ENCODE measurements at regions of chr12 and their contacts with region 1.

Region 1: GRCh38 chr12:30695199-30696103 is at the start of gene IPO8:
- DNase-seq: peak; percentile 92
- H3K4me3 ChIP-seq: peak within 1 kb of the TSS; percentile 80
- H3K27ac ChIP-seq: peak within 1 kb of the TSS; percentile 16
- H3K4me1 ChIP-seq: peaks cover 23% of the 10 kb centered on the region
- CTCF ChIP-seq: peak; percentile 69
- total RNA-seq, gene IPO8: 14.7 and 23.9 TPM in 2 replicates

Region 2: GRCh38 chr12:30754709-30755394 is 59.4 kb after region 1 on chr12 and contains the start of gene CAPRIN2:
- CTCF ChIA-PET with region 1: no interaction called
- POLR2A ChIA-PET with region 1: interaction called, 30 read pairs
- intact Hi-C with region 1: loop called (anchors 1 kb)
- DNase-seq: peak; percentile 94
- H3K4me3 ChIP-seq: peak within 1 kb of the TSS; percentile 89
- H3K27ac ChIP-seq: peak within 1 kb of the TSS; percentile 24
- H3K4me1 ChIP-seq: peaks cover 25% of the 10 kb centered on the region
- CTCF ChIP-seq: peak; percentile 61
- total RNA-seq, gene CAPRIN2: 21.7 and 23.8 TPM in 2 replicates

Region 3: GRCh38 chr12:30784508-30784907 is 89.1 kb after region 1 on chr12:
- CTCF ChIA-PET with region 1: no interaction called
- POLR2A ChIA-PET with region 1: no interaction called
- intact Hi-C with region 1: no loop called
- DNase-seq: no peak
- H3K4me3 ChIP-seq: no peak overlapping the region
- H3K27ac ChIP-seq: no peak overlapping the region
- H3K4me1 ChIP-seq: no peaks in the 10 kb centered on the region
- CTCF ChIP-seq: no peak

Region 4: DNA sequence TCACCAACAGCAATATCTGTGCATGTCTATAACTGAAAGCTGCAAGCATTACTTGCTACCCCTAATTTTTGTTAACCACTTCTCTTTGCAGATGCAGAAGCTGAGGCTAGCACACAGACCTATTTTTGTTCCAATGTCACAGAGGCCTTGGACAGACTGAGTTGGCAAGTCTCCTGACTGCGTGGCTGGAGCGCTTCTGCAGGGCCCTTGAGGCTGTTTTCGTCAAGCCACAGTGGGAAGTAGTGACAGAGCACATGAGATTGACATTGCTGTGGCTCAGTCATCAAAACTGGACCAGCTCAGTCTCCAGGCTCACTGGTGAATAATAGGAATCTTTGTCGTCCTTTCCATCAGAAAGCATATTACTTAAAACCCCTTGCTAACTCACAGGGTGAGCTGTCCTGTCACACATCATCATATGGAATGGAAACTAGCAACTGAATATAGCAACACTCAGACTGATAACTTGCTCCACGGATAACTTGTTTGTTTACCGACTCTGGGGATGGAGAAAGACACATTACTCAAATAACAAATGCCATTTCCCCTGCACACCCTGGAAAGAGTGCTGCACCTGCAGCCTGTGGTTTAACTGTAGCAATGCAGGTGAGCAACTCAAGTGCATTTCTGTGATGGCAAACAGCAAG is 334.6 kb after region 1 on chr12:
- CTCF ChIA-PET with region 1: interaction called, 10 read pairs
- POLR2A ChIA-PET with region 1: no interaction called
- intact Hi-C with region 1: no loop called
- DNase-seq: peak; percentile 62
- H3K4me3 ChIP-seq: peak overlapping the region; percentile 49
- H3K27ac ChIP-seq: peak overlapping the region; percentile 89
- H3K4me1 ChIP-seq: peaks cover 80% of the 10 kb centered on the region
- CTCF ChIP-seq: no peak